Lower leg skin (tissue), 4 donors: ENCODE measurements at regions of chr18 and their contacts with region 1.

Region 1: DNA sequence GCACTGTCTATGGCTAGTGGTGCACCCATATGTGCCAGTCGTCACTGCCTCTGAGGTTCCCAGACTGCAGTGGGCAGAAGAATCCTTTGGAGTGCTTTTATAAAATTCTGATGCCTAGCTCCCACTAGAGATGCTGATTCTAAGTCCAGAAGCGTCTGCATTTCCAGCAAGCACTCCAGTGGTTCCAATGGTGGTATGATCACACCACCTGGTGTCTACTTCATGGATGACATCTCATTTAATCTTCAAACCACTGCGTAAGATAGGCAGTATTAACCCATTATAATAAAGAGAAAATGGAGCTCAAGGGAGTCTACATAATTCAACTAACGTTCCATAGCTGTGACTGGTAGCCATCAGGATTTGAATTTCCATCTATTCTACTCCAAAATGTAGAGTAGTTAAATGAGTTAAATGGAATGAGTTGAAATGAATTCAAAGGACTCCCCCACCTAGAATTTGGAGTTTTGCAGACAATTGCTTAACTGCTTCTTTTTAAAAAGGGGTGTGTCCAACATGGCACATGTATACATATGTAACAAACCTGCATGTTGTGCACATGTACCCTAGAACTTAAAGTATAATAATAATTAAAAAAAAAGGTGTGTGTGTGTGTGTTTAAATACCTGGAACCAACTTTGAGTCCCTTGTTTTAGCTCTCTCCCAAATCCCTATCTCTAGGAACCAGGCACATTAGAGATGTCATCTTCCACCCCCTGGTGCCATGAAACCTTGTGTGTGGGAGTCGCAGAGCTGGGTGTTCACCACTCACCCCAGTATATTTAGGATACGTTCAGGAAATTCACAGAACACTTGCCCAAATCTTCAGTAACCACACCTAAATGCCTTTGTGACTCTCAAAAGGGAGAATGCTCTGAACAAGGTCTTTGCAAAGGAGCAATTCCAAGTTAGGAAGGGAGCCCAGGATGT is 14.1 kb downstream of the LAMA3 start:
- DNase-seq: no peak
- H3K4me3 ChIP-seq: no peak overlapping the region
- CTCF ChIP-seq: no peak
- POLR2A ChIP-seq: no peak

Region 2: DNA sequence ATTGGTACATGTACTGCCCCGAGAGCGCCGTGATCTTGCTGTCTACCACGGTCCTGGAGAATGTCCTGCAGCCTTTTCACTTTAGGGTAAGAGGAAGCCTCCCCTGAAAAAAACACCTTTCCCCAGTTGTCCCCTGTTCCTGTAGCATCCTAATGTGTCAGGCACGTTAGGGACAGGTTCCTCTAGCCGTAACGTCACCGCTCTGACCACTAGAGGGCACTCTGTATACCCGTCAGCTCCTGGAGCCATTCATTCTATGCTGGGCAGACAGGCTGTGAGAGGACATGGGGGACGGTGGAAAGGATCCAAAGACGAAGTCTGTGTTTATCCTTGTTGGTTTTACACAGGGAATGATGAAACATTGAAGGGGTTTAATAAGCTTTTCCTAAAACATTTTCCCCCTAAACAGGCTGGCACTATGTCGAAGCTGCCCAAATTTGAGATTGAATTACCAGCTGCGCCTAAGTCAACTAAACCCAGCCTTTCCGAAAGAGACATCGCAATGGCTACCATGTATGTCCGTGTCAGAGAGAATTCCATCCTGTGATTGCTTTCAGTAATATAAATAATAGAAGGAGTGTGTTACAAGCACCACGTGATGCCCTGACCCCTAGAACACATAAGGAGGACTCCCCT is 187.3 kb before region 1 on chr18:
- intact Hi-C with region 1: loop called (anchors 10 kb)
- DNase-seq: peak; percentile 68 to 94
- H3K4me3 ChIP-seq: no peak overlapping the region
- CTCF ChIP-seq: peak in 1 of 3 donors; percentile 47
- POLR2A ChIP-seq: no peak

Region 3: GRCh38 chr18:23623040-23623439 is 80.3 kb before region 1 on chr18:
- intact Hi-C with region 1: loop called (anchors 5 kb)
- DNase-seq: no peak
- H3K4me3 ChIP-seq: no peak overlapping the region
- CTCF ChIP-seq: no peak
- POLR2A ChIP-seq: no peak

Region 4: DNA sequence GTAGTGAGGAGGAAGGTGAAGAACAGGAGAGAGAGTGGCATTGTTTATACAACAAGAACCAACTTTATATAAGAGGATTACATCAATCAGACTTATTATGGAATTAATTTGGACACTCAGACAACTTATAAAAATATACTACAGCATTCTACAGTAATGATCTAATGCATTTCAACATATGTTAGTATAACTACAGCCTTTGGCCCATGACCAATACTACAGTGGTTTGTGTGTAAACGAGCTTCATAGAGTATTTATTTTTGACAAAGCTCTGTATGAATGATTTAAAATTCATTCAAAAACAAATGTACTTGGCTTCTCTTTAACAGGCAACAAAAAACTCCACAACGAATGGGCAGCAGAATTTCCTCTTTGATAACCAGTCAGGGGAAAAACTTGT is 1575.8 kb after region 1 on chr18:
- intact Hi-C with region 1: no loop called
- DNase-seq: no peak
- H3K4me3 ChIP-seq: no peak overlapping the region
- CTCF ChIP-seq: no peak
- POLR2A ChIP-seq: no peak